ENCODE measurements at regions of chr16 and their contacts with region 1.

Region 1: DNA sequence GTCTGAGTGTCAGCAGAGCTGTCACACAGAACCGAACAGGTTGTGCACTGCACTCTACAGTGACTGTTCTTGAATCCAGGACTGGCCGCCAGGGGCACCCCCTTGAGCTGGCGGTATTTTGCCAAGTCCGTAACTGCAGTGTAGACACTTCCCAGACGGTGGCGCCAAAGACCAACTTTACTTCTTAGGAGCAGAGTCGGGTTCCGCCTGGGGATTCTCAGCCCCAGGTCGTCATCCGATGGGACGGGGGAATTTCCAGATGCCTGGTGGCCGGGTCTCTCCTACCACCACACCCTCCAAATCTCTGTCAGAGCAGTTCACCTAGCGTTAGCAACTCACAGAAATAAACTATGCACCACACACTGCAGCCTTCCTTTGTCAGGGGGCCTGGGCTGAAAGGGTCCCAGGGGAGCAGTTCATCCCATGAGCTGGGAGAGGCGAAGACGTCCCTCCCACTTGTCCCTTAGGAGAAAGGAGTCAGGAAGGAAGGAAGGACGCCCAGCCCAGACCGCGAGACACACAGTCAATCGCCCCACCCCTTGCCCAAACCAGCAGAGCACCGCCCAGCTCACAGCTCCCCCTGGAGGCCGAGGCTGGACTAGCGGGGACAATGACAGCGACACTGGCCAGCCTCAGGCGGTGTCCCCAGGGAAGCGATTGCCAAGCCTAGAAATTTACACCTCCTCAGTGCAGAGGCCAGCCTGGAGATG is 7.4 kb upstream of the RIPOR1 start:
- DNase-seq: peak; percentile 93
- H3K4me3 ChIP-seq: peak overlapping the region; percentile 19 to 60 (median 44)
- H3K27ac ChIP-seq: peak overlapping the region; percentile 76
- H3K4me1 ChIP-seq: peaks cover 27% of the 10 kb centered on the region
- H3K27me3 ChIP-seq: no peaks in the 10 kb centered on the region
- CTCF ChIP-seq: peak; percentile 96 to 98

Region 2: GRCh38 chr16:67456391-67457081 is 64.7 kb before region 1 on chr16:
- CTCF ChIA-PET with region 1: no interaction called
- dilution Hi-C with region 1: no loop called
- in situ Hi-C with region 1: no loop called
- intact Hi-C with region 1: no loop called
- DNase-seq: peak; percentile 31
- H3K4me3 ChIP-seq: no peak overlapping the region
- H3K27ac ChIP-seq: no peak overlapping the region
- H3K4me1 ChIP-seq: peaks cover 27% of the 10 kb centered on the region
- H3K27me3 ChIP-seq: no peaks in the 10 kb centered on the region
- CTCF ChIP-seq: peak; percentile 38 to 70

Region 3: GRCh38 chr16:67546761-67547422 is 25.6 kb after region 1 on chr16:
- CTCF ChIA-PET with region 1: interaction called, 4 read pairs
- dilution Hi-C with region 1: no loop called
- in situ Hi-C with region 1: no loop called
- intact Hi-C with region 1: loop called (anchors 1 kb)
- DNase-seq: peak; percentile 45
- H3K4me3 ChIP-seq: no peak overlapping the region
- H3K27ac ChIP-seq: no peak overlapping the region
- H3K4me1 ChIP-seq: peaks cover 26% of the 10 kb centered on the region
- H3K27me3 ChIP-seq: no peaks in the 10 kb centered on the region
- CTCF ChIP-seq: peak; percentile 93 to 94

Region 4: GRCh38 chr16:67561824-67562525 is 40.7 kb after region 1 on chr16:
- CTCF ChIA-PET with region 1: interaction called, 13 read pairs
- dilution Hi-C with region 1: no loop called
- in situ Hi-C with region 1: no loop called
- intact Hi-C with region 1: loop called (anchors 1 kb)
- DNase-seq: peak; percentile 98
- H3K4me3 ChIP-seq: peak overlapping the region; percentile 66 to 90 (median 67)
- H3K27ac ChIP-seq: peak overlapping the region; percentile 60
- H3K4me1 ChIP-seq: peaks cover 20% of the 10 kb centered on the region
- H3K27me3 ChIP-seq: no peaks in the 10 kb centered on the region
- CTCF ChIP-seq: no peak

Region 5: GRCh38 chr16:67667817-67668494 is 146.7 kb after region 1 on chr16:
- CTCF ChIA-PET with region 1: interaction called, 9 read pairs
- dilution Hi-C with region 1: no loop called
- in situ Hi-C with region 1: loop called in 1 of 2 experiments (anchors 5 kb)
- intact Hi-C with region 1: loop called (anchors 1 kb)
- DNase-seq: peak; percentile 81
- H3K4me3 ChIP-seq: no peak overlapping the region
- H3K27ac ChIP-seq: no peak overlapping the region
- H3K4me1 ChIP-seq: peaks cover 19% of the 10 kb centered on the region
- H3K27me3 ChIP-seq: no peaks in the 10 kb centered on the region
- CTCF ChIP-seq: peak; percentile 94 to 95

Region 6: GRCh38 chr16:67816240-67817031 is 295.2 kb after region 1 on chr16:
- CTCF ChIA-PET with region 1: interaction called, 6 read pairs
- dilution Hi-C with region 1: no loop called
- in situ Hi-C with region 1: loop called in 1 of 2 experiments (anchors 25 kb)
- intact Hi-C with region 1: loop called (anchors 1 kb)
- DNase-seq: peak; percentile 57
- H3K4me3 ChIP-seq: no peak overlapping the region
- H3K27ac ChIP-seq: no peak overlapping the region
- H3K4me1 ChIP-seq: no peaks in the 10 kb centered on the region
- H3K27me3 ChIP-seq: no peaks in the 10 kb centered on the region
- CTCF ChIP-seq: peak; percentile 99 to 100

Region 7: DNA sequence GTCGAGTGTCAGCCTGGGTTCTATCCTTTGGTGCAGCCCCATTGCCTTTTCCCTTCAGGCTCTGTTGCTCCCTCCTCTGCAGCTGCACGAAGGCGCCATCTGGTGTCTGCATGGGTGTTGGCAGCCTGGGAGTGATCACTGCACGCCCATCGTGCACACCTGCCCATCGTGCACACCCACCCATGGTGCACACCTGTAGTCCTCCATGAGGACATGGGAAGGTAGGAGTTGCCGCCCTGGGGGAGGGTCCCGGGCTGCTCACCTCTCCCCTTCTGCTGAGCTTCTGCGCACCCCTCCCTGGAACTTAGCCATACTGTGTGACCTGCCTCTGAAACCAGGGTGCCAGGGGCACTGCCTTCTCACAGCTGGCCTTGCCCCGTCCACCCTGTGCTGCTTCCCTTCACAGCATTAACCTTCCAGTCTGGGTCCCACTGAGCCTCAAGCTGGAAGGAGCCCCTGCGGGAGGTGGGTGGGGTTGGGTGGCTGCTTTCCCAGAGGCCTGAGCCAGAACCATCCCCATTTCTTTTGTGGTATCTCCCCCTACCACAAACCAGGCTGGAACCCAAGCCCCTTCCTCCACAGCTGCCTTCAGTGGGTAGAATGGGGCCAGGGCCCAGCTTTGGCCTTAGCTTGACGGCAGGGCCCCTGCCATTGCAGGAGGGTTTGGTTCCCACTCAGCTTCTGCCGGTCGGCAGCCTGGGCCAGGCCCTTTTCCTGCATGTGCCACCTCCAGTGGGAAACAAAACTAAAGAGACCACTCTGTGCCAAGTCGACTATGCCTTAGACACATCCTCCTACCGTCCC is 407.5 kb after region 1 on chr16:
- CTCF ChIA-PET with region 1: interaction called, 3 read pairs
- dilution Hi-C with region 1: no loop called
- in situ Hi-C with region 1: loop called in 1 of 2 experiments (anchors 25 kb)
- intact Hi-C with region 1: loop called (anchors 1 kb)
- DNase-seq: peak; percentile 49
- H3K4me3 ChIP-seq: no peak overlapping the region
- H3K27ac ChIP-seq: no peak overlapping the region
- H3K4me1 ChIP-seq: no peaks in the 10 kb centered on the region
- H3K27me3 ChIP-seq: no peaks in the 10 kb centered on the region
- CTCF ChIP-seq: peak; percentile 94 to 95

Region 8: DNA sequence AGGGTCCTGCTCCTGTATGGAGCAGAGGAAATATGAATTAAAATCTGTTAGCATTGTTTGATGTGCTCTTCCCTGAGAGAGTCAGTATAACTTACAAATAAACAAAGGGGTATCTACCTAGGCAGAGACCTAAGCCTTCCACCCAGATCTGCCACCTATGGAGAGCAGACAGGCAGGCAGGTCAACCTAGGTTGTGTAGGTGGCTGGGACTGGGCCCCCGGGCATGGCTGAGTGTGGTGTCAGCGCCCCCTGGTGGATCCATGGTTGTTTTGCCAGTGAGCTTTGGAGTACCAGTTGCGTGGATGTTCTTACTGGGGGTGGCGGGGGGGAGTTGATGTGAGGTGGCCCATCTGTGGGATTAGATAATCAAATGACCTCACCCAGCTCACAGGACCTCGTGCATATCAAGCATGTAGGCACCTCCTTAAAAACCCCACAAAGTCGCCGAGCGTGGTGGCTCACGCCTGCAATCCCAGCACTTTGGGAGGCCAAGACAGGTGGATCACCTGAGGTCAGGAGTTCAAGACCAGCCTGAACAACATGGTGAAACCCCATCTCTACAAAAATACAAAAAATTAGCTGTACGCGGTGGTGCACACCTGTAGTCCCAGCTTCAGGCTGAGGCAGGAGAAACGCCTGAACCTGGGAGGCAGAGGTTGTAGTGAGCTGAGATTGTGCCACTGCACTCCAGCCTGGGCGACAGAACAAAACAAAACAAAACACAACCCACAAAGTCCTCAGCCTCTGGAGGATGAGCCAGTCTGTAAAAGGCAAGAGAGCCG is 519.4 kb after region 1 on chr16:
- CTCF ChIA-PET with region 1: no interaction called
- dilution Hi-C with region 1: no loop called
- in situ Hi-C with region 1: no loop called
- intact Hi-C with region 1: loop called (anchors 1 kb)
- DNase-seq: peak; percentile 54
- H3K4me3 ChIP-seq: no peak overlapping the region
- H3K27ac ChIP-seq: no peak overlapping the region
- H3K4me1 ChIP-seq: no peaks in the 10 kb centered on the region
- H3K27me3 ChIP-seq: no peaks in the 10 kb centered on the region
- CTCF ChIP-seq: peak; percentile 80 to 91